Right ventricle myocardium superior (tissue), 1 donor: ENCODE measurements at regions of chr5 and their contacts with region 1.

Region 1: GRCh38 chr5:173283318-173284288 is 44.6 kb downstream of the STC2 start:
- DNase-seq: peak; percentile 86
- ATAC-seq: peak; percentile 91

Region 2: GRCh38 chr5:172984243-172984953 is 299.2 kb before region 1 on chr5:
- intact Hi-C with region 1: loop called (anchors 5 kb)
- DNase-seq: peak; percentile 75
- ATAC-seq: peak; percentile 69

Region 3: DNA sequence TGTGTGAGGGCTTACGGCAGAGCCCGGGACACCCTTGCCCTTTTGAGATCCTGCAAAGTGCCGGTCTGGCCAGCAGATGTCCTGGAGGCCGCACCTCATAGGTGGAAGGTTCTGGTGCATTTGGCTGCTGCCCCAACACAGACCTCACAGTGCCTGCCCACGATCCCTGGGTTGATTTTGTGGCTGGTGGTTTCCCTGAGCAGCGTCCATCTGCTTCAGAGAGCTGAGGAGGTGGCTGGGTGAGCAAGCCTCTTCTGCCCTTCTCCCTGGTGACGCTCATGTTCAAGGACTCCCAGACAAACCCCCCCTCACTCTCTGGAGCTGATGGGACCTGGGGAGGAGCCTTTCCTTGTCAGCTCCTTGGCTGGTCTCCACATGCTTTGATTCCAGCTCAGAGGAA is 120.4 kb before region 1 on chr5:
- intact Hi-C with region 1: loop called (anchors 2 kb)
- DNase-seq: peak; percentile 54
- ATAC-seq: peak; percentile 61

Region 4: DNA sequence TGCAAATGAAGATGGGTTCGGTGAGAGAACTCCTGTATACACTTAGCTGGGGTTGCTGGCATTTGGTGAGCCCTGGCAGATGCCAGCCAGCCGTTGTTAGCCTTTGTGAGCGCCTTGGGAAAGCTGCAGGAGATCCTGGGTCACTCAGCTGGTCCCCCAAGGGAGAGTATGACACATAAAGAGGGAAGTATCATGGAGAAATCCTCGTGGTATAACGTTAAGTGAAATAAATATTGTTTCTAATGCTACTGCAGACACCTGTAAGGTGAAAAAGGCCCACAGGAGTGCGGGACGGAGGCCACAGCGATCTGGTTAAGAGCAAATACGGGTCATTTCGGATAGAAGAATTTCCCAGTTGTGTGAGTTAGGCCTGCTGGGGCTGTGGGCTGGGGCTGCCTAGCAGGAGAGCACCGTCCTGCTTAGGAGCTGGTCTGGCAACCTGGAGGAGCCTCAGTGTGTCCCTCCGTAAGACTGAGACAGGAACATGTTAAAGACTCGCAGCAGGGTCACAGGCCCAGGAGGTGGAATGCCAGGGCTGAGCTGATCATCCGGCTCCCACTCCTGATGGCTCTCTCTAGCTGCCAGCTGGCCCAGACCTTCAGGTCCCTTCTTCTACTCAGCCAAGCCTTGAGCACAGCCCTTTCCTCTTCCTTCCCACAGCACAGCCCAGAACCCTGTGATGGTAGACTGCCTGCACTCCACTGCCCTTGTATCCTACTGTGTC is 53.5 kb before region 1 on chr5:
- intact Hi-C with region 1: loop called (anchors 2 kb)
- DNase-seq: no peak
- ATAC-seq: peak; percentile 17

Region 5: GRCh38 chr5:173238312-173239232 is 45.0 kb before region 1 on chr5:
- intact Hi-C with region 1: loop called (anchors 2 kb)
- DNase-seq: no peak
- ATAC-seq: no peak

Region 6: DNA sequence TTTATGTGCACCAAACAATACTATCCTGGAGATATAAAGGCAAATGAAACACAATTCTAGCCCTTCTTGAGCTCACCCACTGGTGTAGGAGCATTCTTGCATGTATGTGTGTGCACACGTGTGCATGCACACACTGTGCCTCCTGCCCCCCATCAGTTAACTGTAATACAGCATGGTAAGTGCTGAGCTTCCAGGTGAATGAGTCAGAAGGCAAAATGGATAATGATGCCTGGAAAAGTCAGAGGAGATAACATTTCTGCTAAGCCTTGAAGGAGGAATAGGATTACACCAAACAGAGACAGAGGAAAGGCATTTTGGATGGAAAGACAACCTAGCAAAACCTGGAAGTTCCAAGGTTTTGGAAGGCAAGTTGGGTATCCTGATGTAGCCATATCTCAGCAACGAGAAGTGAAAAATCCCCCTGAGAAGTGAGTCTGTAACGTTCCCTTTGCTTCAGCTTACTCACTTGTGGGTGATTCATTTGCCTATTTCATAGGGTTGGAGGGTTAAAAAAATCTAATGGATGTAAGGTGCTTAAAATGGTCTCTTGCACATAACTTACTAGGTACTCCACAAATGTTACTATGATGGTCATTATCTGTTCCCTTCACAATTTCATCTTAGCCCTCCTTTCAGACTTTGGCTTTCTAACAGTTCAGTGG is 146.0 kb after region 1 on chr5:
- intact Hi-C with region 1: no loop called
- DNase-seq: no peak
- ATAC-seq: no peak